CD8-positive, alpha-beta T cell (primary cell): ENCODE measurements at regions of chrX and their contacts with region 1.

Region 1: GRCh38 chrX:136496770-136497598 is at the start of gene HTATSF1:
- DNase-seq: peak; percentile 70 to 94 (median 83)
- ATAC-seq: peak; percentile 83
- H3K4me3 ChIP-seq: peak within 1 kb of the TSS; percentile 44 to 83
- H3K4me3 Mint-ChIP-seq: peak within 1 kb of the TSS; percentile 92
- H3K27ac ChIP-seq: peak within 1 kb of the TSS; percentile 84 to 94
- H3K27ac Mint-ChIP-seq: peak within 1 kb of the TSS; percentile 99
- H3K4me1 ChIP-seq: peaks cover 18% of the 10 kb centered on the region
- H3K4me1 Mint-ChIP-seq: peaks cover 23% of the 10 kb centered on the region
- H3K27me3 ChIP-seq: no peaks in the 10 kb centered on the region
- H3K27me3 Mint-ChIP-seq: no peaks in the 10 kb centered on the region
- CTCF ChIP-seq: no peak
- total RNA-seq, gene HTATSF1: 28.5 to 29.5 TPM

Region 2: DNA sequence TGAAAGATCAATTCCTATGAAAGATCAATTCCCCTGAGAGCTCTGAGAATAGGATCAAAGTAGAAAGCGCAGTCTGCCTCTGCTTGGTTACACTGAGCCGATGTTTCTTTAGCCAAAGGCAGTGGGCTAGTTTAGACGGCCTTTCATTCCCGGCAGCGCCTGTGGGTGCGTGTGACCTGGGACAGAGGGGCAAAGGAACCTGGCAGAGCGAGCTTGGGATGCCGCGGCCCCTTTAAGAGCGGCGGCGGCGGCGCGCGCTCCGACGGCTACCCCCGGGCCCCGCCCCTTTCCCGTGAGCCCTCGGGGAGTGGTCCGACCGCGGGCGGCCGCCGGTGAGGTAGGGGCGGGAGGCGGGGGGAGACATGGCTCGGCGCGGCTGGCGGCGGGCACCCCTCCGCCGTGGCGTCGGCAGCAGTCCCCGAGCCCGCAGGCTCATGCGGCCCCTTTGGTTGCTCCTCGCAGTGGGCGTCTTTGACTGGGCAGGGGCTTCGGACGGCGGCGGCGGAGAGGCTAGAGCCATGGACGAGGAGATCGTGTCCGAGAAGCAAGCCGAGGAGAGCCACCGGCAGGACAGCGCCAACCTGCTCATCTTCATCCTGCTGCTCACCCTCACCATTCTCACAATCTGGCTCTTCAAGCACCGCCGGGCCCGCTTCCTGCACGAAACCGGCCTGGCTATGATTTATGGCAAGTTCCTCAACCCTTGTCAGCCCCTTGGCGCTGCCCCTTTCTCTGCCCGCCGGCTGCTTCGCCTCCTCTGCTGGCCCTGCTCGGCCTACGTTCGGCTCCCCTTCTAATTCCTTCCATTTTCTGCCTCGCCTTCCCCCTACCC is 511.6 kb before region 1 on chrX and contains the start of gene SLC9A6:
- CTCF ChIA-PET with region 1: no interaction called
- POLR2A ChIA-PET with region 1: no interaction called
- intact Hi-C with region 1: loop called in 1 of 2 experiments (anchors 2 kb)
- DNase-seq: peak in 8 of 9 experiments; percentile 46 to 80 (median 68)
- ATAC-seq: peak; percentile 88
- H3K4me3 ChIP-seq: peak within 1 kb of the TSS; percentile 71 to 83
- H3K4me3 Mint-ChIP-seq: peak within 1 kb of the TSS; percentile 91
- H3K27ac ChIP-seq: peak within 1 kb of the TSS; percentile 64 to 71
- H3K27ac Mint-ChIP-seq: peak within 1 kb of the TSS; percentile 93
- H3K4me1 ChIP-seq: peaks cover 26% of the 10 kb centered on the region
- H3K4me1 Mint-ChIP-seq: peaks cover 64% of the 10 kb centered on the region
- H3K27me3 ChIP-seq: no peaks in the 10 kb centered on the region
- H3K27me3 Mint-ChIP-seq: no peaks in the 10 kb centered on the region
- CTCF ChIP-seq: no peak
- total RNA-seq, gene SLC9A6: 15.9 to 18.7 TPM

Region 3: GRCh38 chrX:136251041-136251991 is 245.7 kb before region 1 on chrX and contains the start of gene MAP7D3:
- CTCF ChIA-PET with region 1: no interaction called
- POLR2A ChIA-PET with region 1: no interaction called
- intact Hi-C with region 1: loop called (anchors 1 to 10 kb)
- DNase-seq: peak; percentile 27 to 85 (median 67)
- ATAC-seq: peak; percentile 91
- H3K4me3 ChIP-seq: peak within 1 kb of the TSS; percentile 56 to 71
- H3K4me3 Mint-ChIP-seq: peak within 1 kb of the TSS; percentile 92
- H3K27ac ChIP-seq: peak within 1 kb of the TSS in 1 of 2 experiments; percentile 37
- H3K27ac Mint-ChIP-seq: peak within 1 kb of the TSS; percentile 84
- H3K4me1 ChIP-seq: peaks cover 11% of the 10 kb centered on the region
- H3K4me1 Mint-ChIP-seq: peaks cover 13% of the 10 kb centered on the region
- H3K27me3 ChIP-seq: no peaks in the 10 kb centered on the region
- H3K27me3 Mint-ChIP-seq: no peaks in the 10 kb centered on the region
- CTCF ChIP-seq: no peak
- total RNA-seq, gene MAP7D3: 3.6 TPM

Region 4: DNA sequence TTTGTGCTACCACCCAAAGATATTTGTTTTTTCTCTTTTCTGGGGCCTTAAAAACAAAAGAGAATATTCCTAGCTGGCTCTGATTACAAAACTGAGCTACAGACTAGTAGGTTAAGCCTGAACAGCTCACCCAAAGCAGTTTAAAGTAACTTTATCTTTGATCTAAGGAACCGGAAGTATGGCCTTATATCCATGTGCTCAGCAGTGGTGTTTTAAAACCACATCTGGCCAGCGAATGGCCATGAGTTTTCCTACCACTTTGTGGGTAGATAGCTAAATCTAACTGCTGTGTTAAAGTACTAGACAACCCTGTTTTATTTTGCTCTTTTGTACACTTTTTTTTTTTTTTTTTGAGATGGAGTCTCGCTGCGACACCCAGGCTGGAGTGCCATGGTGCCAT is 171.6 kb before region 1 on chrX:
- CTCF ChIA-PET with region 1: no interaction called
- POLR2A ChIA-PET with region 1: no interaction called
- intact Hi-C with region 1: no loop called
- DNase-seq: no peak
- ATAC-seq: no peak
- H3K4me3 ChIP-seq: no peak overlapping the region
- H3K4me3 Mint-ChIP-seq: no peak overlapping the region
- H3K27ac ChIP-seq: no peak overlapping the region
- H3K27ac Mint-ChIP-seq: no peak overlapping the region
- H3K4me1 ChIP-seq: no peaks in the 10 kb centered on the region
- H3K4me1 Mint-ChIP-seq: no peaks in the 10 kb centered on the region
- H3K27me3 ChIP-seq: no peaks in the 10 kb centered on the region
- H3K27me3 Mint-ChIP-seq: no peaks in the 10 kb centered on the region
- CTCF ChIP-seq: no peak

Region 5: GRCh38 chrX:136588041-136588788 is 91.2 kb after region 1 on chrX:
- CTCF ChIA-PET with region 1: no interaction called
- POLR2A ChIA-PET with region 1: interaction called, 5 read pairs
- intact Hi-C with region 1: loop called in 1 of 2 experiments (anchors 5 kb)
- DNase-seq: peak in 2 of 9 experiments; percentile 43 to 71
- ATAC-seq: peak; percentile 38
- H3K4me3 ChIP-seq: no peak overlapping the region
- H3K4me3 Mint-ChIP-seq: peak overlapping the region; percentile 42
- H3K27ac ChIP-seq: peak overlapping the region in 1 of 2 experiments; percentile 76
- H3K27ac Mint-ChIP-seq: peak overlapping the region; percentile 89
- H3K4me1 ChIP-seq: peaks cover 38% of the 10 kb centered on the region
- H3K4me1 Mint-ChIP-seq: peaks cover 48% of the 10 kb centered on the region
- H3K27me3 ChIP-seq: no peaks in the 10 kb centered on the region
- H3K27me3 Mint-ChIP-seq: no peaks in the 10 kb centered on the region
- CTCF ChIP-seq: no peak

Region 6: DNA sequence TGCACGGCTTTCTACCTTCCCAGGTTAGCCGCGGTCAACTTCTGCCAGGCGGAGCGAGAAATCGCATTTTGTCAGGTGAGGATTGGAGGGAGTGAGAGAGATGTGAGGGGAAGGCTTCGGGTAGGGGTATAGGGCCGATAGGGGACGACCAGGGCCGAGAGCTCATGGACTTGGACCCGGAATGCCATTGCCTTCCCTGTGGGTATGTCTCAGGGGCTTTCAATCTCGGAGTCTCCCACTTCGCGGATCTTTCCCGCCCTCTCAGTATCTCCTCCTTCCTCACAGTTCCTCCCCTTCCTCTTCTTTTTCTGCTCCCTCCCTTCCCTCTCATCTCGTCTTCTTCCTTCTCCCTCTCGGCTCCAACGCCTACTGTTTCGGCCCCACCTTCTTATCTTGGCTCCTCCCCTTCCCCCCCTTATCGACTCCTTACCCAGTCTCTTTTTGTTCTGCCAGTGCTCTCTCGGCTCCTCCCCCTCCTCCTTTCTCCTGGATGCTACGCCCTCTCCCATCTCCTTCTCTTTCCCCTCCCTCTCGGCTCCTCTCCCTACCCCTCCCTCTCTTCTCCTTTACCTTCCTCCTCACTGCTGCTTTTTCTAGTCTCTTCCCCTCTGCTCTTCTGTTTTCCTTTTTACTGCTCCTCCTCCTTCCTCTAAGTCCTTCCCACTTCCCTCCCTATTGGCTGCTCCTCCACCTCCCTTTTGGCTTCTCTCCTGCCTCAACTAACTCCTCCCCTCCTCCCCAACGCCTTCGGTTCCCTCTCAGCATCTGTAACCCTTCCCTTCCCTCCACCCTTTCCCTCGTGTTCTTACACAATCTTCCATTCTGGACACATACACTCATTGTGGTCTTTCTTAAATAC is 413.0 kb after region 1 on chrX:
- CTCF ChIA-PET with region 1: no interaction called
- POLR2A ChIA-PET with region 1: no interaction called
- intact Hi-C with region 1: loop called in 1 of 2 experiments (anchors 1 kb)
- DNase-seq: peak; percentile 12 to 82 (median 60)
- ATAC-seq: peak; percentile 65
- H3K4me3 ChIP-seq: peak overlapping the region; percentile 46 to 73
- H3K4me3 Mint-ChIP-seq: peak overlapping the region; percentile 92
- H3K27ac ChIP-seq: peak overlapping the region; percentile 33 to 80
- H3K27ac Mint-ChIP-seq: peak overlapping the region; percentile 85
- H3K4me1 ChIP-seq: no peaks in the 10 kb centered on the region
- H3K4me1 Mint-ChIP-seq: peaks cover 20% of the 10 kb centered on the region
- H3K27me3 ChIP-seq: no peaks in the 10 kb centered on the region
- H3K27me3 Mint-ChIP-seq: no peaks in the 10 kb centered on the region
- CTCF ChIP-seq: no peak